ENCODE measurements at regions of chr10 and their contacts with region 1.

Region 1: GRCh38 chr10:119542988-119543813 is 682 bp upstream of the RGS10 start:
- DNase-seq: peak; percentile 70
- H3K4me3 Mint-ChIP-seq: peak overlapping the region; percentile 78
- H3K27ac Mint-ChIP-seq: peak overlapping the region; percentile 80
- H3K4me1 Mint-ChIP-seq: peaks cover 45% of the 10 kb centered on the region
- H3K27me3 Mint-ChIP-seq: peaks cover 25% of the 10 kb centered on the region

Region 2: DNA sequence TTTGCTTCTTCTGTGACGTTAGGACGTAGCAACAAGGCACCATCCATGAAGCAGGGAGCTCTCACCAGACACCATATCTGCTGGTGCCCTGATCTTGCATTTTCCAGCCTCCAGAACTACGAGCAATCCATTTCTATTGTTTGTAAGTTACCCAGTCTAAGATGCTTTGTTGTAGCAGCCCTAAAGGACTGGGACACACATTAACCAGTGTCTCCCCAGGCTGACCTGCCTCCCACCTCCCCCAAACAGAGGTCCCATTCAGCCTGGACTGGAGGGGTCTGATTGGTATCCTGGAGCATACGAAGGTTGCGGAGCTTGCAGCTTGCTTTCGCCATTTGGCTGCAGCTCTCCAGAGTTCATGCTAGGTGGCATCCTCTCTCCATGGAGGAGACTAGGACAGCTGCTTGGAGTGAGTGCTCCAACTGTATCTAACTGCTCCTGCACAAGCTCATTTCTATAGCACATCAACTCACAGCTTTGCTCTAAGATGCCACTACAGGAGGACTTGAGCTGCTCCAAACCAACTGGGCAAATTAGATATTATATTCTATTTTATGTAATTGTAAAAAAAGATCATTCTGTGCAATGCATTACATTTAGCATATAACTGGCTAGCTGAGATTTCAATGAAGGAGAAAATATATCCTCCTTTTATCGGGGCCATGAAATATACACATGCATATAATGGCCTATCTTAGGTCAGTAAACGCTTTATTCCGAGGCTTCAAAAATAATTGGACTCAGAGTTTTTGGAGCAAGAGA is 343.8 kb before region 1 on chr10:
- CTCF ChIA-PET with region 1: interaction called, 39 read pairs
- POLR2A ChIA-PET with region 1: interaction called, 10 read pairs
- DNase-seq: peak; percentile 53
- H3K4me3 Mint-ChIP-seq: no peak overlapping the region
- H3K27ac Mint-ChIP-seq: no peak overlapping the region
- H3K4me1 Mint-ChIP-seq: peaks cover 22% of the 10 kb centered on the region
- H3K27me3 Mint-ChIP-seq: peaks cover 2% of the 10 kb centered on the region

Region 3: DNA sequence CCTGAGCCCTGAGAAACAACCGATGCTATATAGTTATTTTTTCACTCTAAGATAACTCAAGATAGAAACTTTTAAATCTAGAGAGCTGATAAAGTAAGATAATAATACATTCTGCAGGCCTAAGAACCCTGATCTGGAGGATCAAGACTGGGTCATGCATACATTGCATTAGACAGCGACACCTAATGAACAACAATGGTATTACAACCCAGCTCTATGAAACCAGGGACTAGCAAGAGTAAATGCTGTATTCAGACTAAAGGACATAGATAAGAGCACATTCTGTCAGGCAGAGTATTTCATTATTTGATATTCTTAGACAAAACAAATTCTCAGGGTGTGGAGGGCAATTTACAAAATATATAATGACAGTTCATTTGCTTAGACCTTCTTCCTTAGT is 187.3 kb before region 1 on chr10:
- CTCF ChIA-PET with region 1: no interaction called
- POLR2A ChIA-PET with region 1: no interaction called
- DNase-seq: no peak
- H3K4me3 Mint-ChIP-seq: no peak overlapping the region
- H3K27ac Mint-ChIP-seq: no peak overlapping the region
- H3K4me1 Mint-ChIP-seq: peaks cover 16% of the 10 kb centered on the region
- H3K27me3 Mint-ChIP-seq: no peaks in the 10 kb centered on the region

Region 4: DNA sequence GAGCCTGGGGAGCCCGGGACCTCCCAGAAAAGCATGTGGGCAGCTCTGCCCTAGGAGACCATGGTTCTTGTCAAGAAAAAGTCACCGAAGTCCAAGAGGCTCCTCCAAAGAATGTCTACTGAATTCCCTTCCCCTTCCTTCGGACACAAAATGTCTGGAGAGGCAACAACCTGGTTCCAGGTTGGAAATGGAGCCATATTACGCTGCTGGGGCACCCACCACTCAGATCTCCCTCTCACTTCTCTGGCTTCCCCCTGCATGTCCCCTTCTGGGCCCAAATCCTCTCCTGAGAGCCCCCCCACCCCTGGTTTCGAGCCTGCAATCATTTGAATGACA is 53.2 kb before region 1 on chr10:
- CTCF ChIA-PET with region 1: interaction called, 16 read pairs
- POLR2A ChIA-PET with region 1: interaction called, 9 read pairs
- DNase-seq: no peak
- H3K4me3 Mint-ChIP-seq: peak overlapping the region; percentile 65
- H3K27ac Mint-ChIP-seq: peak overlapping the region; percentile 85
- H3K4me1 Mint-ChIP-seq: peaks cover 45% of the 10 kb centered on the region
- H3K27me3 Mint-ChIP-seq: no peaks in the 10 kb centered on the region

Region 5: GRCh38 chr10:119531067-119531466 is 12.1 kb before region 1 on chr10:
- CTCF ChIA-PET with region 1: interaction called, 6 read pairs
- POLR2A ChIA-PET with region 1: interaction called, 16 read pairs
- DNase-seq: no peak
- H3K4me3 Mint-ChIP-seq: no peak overlapping the region
- H3K27ac Mint-ChIP-seq: no peak overlapping the region
- H3K4me1 Mint-ChIP-seq: peaks cover 31% of the 10 kb centered on the region
- H3K27me3 Mint-ChIP-seq: no peaks in the 10 kb centered on the region

Region 6: GRCh38 chr10:119650692-119651513 is 107.7 kb after region 1 on chr10 and contains the start of gene BAG3:
- CTCF ChIA-PET with region 1: interaction called, 9 read pairs
- POLR2A ChIA-PET with region 1: interaction called, 34 read pairs
- DNase-seq: peak; percentile 86
- H3K4me3 Mint-ChIP-seq: peak within 1 kb of the TSS; percentile 95
- H3K27ac Mint-ChIP-seq: peak within 1 kb of the TSS; percentile 91
- H3K4me1 Mint-ChIP-seq: peaks cover 43% of the 10 kb centered on the region
- H3K27me3 Mint-ChIP-seq: peaks cover 3% of the 10 kb centered on the region
- total RNA-seq, gene BAG3: 26.3 to 27.2 TPM

Region 7: GRCh38 chr10:119705434-119705831 is 162.2 kb after region 1 on chr10:
- CTCF ChIA-PET with region 1: no interaction called
- POLR2A ChIA-PET with region 1: no interaction called
- DNase-seq: no peak
- H3K4me3 Mint-ChIP-seq: peak overlapping the region; percentile 72
- H3K27ac Mint-ChIP-seq: peak overlapping the region; percentile 92
- H3K4me1 Mint-ChIP-seq: peaks cover 57% of the 10 kb centered on the region
- H3K27me3 Mint-ChIP-seq: no peaks in the 10 kb centered on the region

Measured in activated CD4-positive, alpha-beta memory T cell treated with anti-CD3 and anti-CD28 coated beads, Interleukin-2, amount 10 ng/mL, durations not matched to agents 7 days and 5 days (primary cell).